Right ventricle myocardium superior (tissue), 1 donor: ENCODE measurements at regions of chr16 and their contacts with region 1.

Region 1: GRCh38 chr16:87765776-87766484 is at the start of gene KLHDC4:
- DNase-seq: peak; percentile 93
- ATAC-seq: peak; percentile 98
- total RNA-seq, gene KLHDC4: 8.7 TPM

Region 2: DNA sequence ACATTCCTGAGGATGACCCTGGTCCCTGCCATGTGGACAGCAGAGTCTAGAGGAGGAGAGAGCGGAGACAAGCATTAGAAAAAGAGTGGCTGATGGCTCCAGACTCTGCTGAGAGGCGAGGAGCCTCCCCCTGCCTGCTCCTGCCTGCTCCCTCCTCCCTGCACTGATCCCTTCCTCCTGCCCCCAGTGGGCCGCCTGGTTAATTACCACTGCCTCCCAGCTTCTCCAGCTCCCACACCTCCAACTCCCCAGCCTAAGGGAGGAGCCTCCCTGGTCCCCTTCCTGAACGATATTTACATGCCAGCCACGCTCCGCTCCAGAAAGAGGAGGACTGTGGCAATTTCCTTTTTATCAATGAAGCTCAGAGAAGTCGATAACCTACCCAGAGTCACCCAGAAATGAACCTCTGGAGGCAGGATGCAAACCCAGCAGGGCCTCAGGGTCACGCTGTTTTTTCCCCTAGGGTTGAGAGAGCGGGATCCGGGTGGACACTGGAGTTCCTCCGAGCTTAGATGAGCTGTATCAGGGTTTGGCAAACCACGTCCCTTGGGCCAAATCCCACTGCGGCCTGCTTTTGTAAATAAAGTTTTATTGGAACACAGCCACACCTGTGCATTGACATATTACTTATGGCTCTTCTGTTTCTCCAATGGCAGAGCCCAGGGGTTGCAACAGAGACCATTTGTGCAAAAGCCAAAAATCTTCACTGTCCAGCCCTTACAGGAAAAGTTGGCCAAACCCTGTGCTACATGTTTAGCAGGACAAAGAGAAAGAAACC is 190.7 kb before region 1 on chr16:
- intact Hi-C with region 1: no loop called
- DNase-seq: no peak
- ATAC-seq: no peak

Region 3: DNA sequence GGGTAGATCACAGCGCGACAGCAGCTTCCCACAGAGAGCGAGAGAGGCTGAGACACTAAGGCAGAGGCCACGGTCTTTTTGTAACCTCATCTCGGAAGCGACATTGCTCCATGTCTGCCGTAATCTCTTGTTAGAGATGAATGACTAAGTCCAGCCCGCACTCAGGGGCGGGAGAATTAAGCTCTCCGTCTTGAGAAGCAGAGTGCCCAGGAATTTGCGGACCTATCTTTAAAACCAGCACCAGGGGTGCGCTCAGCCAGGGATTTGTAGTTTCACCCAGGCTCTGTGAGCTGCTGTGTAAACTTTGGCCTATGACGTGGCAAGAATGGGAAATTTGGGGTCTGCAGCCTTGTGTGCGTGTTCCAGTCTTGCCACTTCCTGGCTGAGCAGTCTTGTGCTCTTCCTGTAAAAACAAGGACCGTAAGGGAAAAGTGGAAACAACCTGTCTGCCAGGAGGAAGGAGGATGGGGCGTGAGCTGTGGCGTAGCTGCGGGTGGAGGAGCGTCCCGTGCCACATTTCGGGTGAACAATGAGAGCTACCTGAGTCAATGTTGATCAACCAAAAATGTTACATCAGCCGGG is 179.6 kb before region 1 on chr16:
- intact Hi-C with region 1: loop called (anchors 5 kb)
- DNase-seq: no peak
- ATAC-seq: no peak